MCF 10A (cell line): ENCODE measurements at regions of chr12 and their contacts with region 1.

Region 1: GRCh38 chr12:47742253-47742825 is 16.3 kb downstream of the RAPGEF3 start:
- DNase-seq: peak; percentile 64
- H3K4me3 Mint-ChIP-seq: no peak overlapping the region
- H3K27ac Mint-ChIP-seq: no peak overlapping the region
- H3K4me1 Mint-ChIP-seq: peaks cover 9% of the 10 kb centered on the region
- H3K27me3 Mint-ChIP-seq: peaks cover 17% of the 10 kb centered on the region
- CTCF ChIP-seq: peak; percentile 99

Region 2: GRCh38 chr12:47602325-47602724 is 140.0 kb before region 1 on chr12:
- CTCF ChIA-PET with region 1: no interaction called
- POLR2A ChIA-PET with region 1: no interaction called
- intact Hi-C with region 1: no loop called
- DNase-seq: no peak
- H3K4me3 Mint-ChIP-seq: no peak overlapping the region
- H3K27ac Mint-ChIP-seq: no peak overlapping the region
- H3K4me1 Mint-ChIP-seq: peaks cover 9% of the 10 kb centered on the region
- H3K27me3 Mint-ChIP-seq: no peaks in the 10 kb centered on the region
- CTCF ChIP-seq: no peak

Region 3: DNA sequence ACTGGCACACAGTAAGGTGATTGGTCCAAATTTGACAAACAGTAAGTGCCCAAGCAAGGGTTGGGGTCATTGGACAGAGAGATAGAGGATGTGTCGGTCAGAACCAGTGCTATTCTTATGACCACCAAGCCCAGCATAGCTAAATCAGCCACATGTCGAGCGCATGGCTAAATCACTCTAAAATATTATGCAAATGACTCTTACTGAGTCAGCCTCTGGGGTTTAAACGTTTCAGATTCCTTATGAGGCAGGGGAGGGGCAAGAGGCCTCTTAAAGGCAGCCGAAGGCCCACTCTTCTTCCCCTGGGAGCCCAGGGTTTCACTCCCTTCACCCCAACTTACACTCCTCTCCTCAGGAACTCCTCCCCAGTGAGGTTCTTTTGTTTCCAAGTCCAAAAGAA is 16.4 kb before region 1 on chr12:
- CTCF ChIA-PET with region 1: interaction called, 173 read pairs
- POLR2A ChIA-PET with region 1: interaction called, 4 read pairs
- intact Hi-C with region 1: no loop called
- DNase-seq: no peak
- H3K4me3 Mint-ChIP-seq: no peak overlapping the region
- H3K27ac Mint-ChIP-seq: no peak overlapping the region
- H3K4me1 Mint-ChIP-seq: peaks cover 17% of the 10 kb centered on the region
- H3K27me3 Mint-ChIP-seq: no peaks in the 10 kb centered on the region
- CTCF ChIP-seq: no peak

Region 4: GRCh38 chr12:47773062-47773857 is 30.9 kb after region 1 on chr12 and contains the start of gene SLC48A1:
- CTCF ChIA-PET with region 1: interaction called, 843 read pairs
- POLR2A ChIA-PET with region 1: interaction called, 38 read pairs
- intact Hi-C with region 1: no loop called
- DNase-seq: peak; percentile 61
- H3K4me3 Mint-ChIP-seq: peak within 1 kb of the TSS; percentile 74
- H3K27ac Mint-ChIP-seq: peak within 1 kb of the TSS; percentile 59
- H3K4me1 Mint-ChIP-seq: peaks cover 18% of the 10 kb centered on the region
- H3K27me3 Mint-ChIP-seq: no peaks in the 10 kb centered on the region
- CTCF ChIP-seq: no peak
- total RNA-seq, gene SLC48A1: 19.4 and 20.2 TPM in 2 replicates

Region 5: GRCh38 chr12:47797441-47797840 is 55.1 kb after region 1 on chr12:
- CTCF ChIA-PET with region 1: interaction called, 73 read pairs
- POLR2A ChIA-PET with region 1: interaction called, 3 read pairs
- intact Hi-C with region 1: no loop called
- DNase-seq: no peak
- H3K4me3 Mint-ChIP-seq: no peak overlapping the region
- H3K27ac Mint-ChIP-seq: no peak overlapping the region
- H3K4me1 Mint-ChIP-seq: peaks cover 5% of the 10 kb centered on the region
- H3K27me3 Mint-ChIP-seq: no peaks in the 10 kb centered on the region
- CTCF ChIP-seq: no peak

Region 6: DNA sequence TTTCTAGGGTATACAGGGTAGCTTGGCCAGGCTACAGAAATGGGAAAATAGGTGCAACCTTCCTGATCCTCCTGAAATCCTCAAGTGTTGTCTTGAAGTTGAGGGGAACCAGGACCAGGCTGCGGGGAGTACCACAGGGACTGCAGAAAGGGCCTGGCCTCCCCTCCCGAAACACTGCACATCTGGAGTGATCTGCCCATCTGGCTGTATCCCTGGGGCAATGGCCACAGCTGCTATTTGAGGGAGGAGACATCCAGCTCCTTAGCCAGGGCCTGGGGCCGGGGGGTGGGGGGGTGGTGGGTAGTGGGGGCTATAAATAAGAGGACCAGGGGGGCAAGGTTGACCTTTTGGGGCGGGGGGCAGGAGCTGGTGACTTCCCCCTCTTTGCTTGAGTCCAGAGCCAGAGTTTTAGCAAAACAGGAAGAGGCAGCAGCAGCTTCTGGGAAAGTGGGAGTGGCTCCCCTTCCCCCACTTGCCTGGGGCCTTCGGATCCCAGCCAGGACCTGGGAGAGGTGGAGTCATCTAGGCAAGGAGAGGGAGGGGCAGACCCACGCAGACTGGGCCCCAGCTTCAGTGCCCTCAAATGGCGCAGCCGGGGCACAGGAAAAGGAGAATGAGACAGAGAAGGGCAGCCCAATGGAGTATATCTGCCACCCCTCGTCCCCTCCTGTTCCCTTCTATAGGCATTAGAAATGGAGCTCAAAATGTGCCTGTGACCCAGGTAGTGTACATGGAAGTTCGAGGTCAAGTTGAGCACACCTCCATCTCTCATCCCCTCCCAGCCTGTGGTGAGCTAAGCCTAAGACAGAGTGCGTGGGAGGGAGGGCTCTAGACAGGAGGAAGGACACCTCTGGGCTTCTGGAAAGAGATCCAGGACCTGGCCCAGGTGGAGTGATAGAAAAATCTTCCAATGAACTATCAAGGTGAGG is 86.5 kb after region 1 on chr12:
- CTCF ChIA-PET with region 1: interaction called, 376 read pairs
- POLR2A ChIA-PET with region 1: interaction called, 5 read pairs
- intact Hi-C with region 1: no loop called
- DNase-seq: peak; percentile 95
- H3K4me3 Mint-ChIP-seq: peak overlapping the region; percentile 66
- H3K27ac Mint-ChIP-seq: peak overlapping the region; percentile 80
- H3K4me1 Mint-ChIP-seq: peaks cover 59% of the 10 kb centered on the region
- H3K27me3 Mint-ChIP-seq: no peaks in the 10 kb centered on the region
- CTCF ChIP-seq: no peak